Naive thymus-derived CD4-positive, alpha-beta T cell (primary cell): ENCODE measurements at regions of chr13 and their contacts with region 1.

Region 1: GRCh38 chr13:73984949-73985691 is 149.1 kb downstream of the KLF12 start:
- DNase-seq: peak; percentile 48 to 95 (median 91)
- ATAC-seq: peak; percentile 94
- H3K4me3 ChIP-seq: peak overlapping the region; percentile 14
- H3K4me3 Mint-ChIP-seq: peak overlapping the region in 9 of 10 donors; percentile 67 to 89 (median 78)
- H3K27ac ChIP-seq: peak overlapping the region; percentile 82
- H3K27ac Mint-ChIP-seq: peak overlapping the region in 1 of 9 donors; percentile 80
- H3K4me1 ChIP-seq: peaks cover 28 to 52% of the 10 kb centered on the region in 2 donors
- H3K4me1 Mint-ChIP-seq: peaks cover 28 to 54% (median 44%) of the 10 kb centered on the region in 7 donors
- H3K27me3 ChIP-seq: no peaks in the 10 kb centered on the region
- H3K27me3 Mint-ChIP-seq: no peaks in the 10 kb centered on the region

Region 2: GRCh38 chr13:73835138-73835721 is 149.9 kb before region 1 on chr13:
- CTCF ChIA-PET with region 1: no interaction called
- POLR2A ChIA-PET with region 1: interaction called, 3 read pairs
- intact Hi-C with region 1: loop called in 1 of 2 experiments (anchors 5 kb)
- DNase-seq: peak in 7 of 9 donors; percentile 16 to 60 (median 54)
- ATAC-seq: peak; percentile 64
- H3K4me3 ChIP-seq: no peak overlapping the region
- H3K4me3 Mint-ChIP-seq: no peak overlapping the region
- H3K27ac ChIP-seq: no peak overlapping the region
- H3K27ac Mint-ChIP-seq: no peak overlapping the region
- H3K4me1 ChIP-seq: peaks cover 7 to 41% of the 10 kb centered on the region in 2 donors
- H3K4me1 Mint-ChIP-seq: peaks cover 5 to 71% (median 43%) of the 10 kb centered on the region in 7 donors
- H3K27me3 ChIP-seq: no peaks in the 10 kb centered on the region
- H3K27me3 Mint-ChIP-seq: no peaks in the 10 kb centered on the region

Region 3: DNA sequence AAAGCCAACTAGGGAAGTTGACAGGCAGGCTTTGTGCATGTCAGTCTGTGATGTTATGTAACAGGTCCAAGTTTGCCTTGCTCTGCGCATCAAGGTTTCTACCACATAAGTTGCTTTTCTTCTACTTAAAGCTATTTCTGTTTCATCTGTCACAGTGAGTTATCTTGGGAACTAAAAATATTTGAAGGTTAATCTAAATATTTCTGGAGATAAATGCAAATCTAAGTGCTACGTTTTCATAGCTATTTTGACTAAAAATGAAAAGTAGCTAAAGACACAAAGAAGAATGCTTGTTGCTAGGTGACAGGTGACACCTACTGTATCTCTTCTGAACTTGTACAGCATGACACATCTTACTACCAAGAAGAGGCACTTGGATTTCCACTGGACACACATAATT is 13.5 kb after region 1 on chr13:
- CTCF ChIA-PET with region 1: no interaction called
- POLR2A ChIA-PET with region 1: interaction called, 6 read pairs
- intact Hi-C with region 1: loop called in 1 of 2 experiments (anchors 2 kb)
- DNase-seq: peak in 4 of 9 donors; percentile 12 to 40 (median 28)
- ATAC-seq: peak; percentile 50
- H3K4me3 ChIP-seq: no peak overlapping the region
- H3K4me3 Mint-ChIP-seq: peak overlapping the region in 5 of 10 donors; percentile 6 to 42 (median 14)
- H3K27ac ChIP-seq: peak overlapping the region; percentile 23
- H3K27ac Mint-ChIP-seq: peak overlapping the region in 7 of 9 donors; percentile 16 to 78 (median 47)
- H3K4me1 ChIP-seq: peaks cover 13 to 14% of the 10 kb centered on the region in 2 donors
- H3K4me1 Mint-ChIP-seq: peaks cover 11 to 89% (median 72%) of the 10 kb centered on the region in 7 donors
- H3K27me3 ChIP-seq: no peaks in the 10 kb centered on the region
- H3K27me3 Mint-ChIP-seq: no peaks in the 10 kb centered on the region

Region 4: GRCh38 chr13:74062933-74063332 is 77.8 kb after region 1 on chr13:
- CTCF ChIA-PET with region 1: no interaction called
- POLR2A ChIA-PET with region 1: interaction called, 3 read pairs
- intact Hi-C with region 1: loop called (anchors 2 kb)
- DNase-seq: peak in 1 of 9 donors; percentile 24
- ATAC-seq: peak; percentile 5
- H3K4me3 ChIP-seq: no peak overlapping the region
- H3K4me3 Mint-ChIP-seq: peak overlapping the region; percentile 26 to 80 (median 64)
- H3K27ac ChIP-seq: no peak overlapping the region
- H3K27ac Mint-ChIP-seq: peak overlapping the region; percentile 58 to 86 (median 81)
- H3K4me1 ChIP-seq: peaks cover 52 to 73% of the 10 kb centered on the region in 2 donors
- H3K4me1 Mint-ChIP-seq: peaks cover 50 to 95% (median 91%) of the 10 kb centered on the region in 7 donors
- H3K27me3 ChIP-seq: no peaks in the 10 kb centered on the region
- H3K27me3 Mint-ChIP-seq: no peaks in the 10 kb centered on the region

Region 5: GRCh38 chr13:74246487-74246886 is 261.4 kb after region 1 on chr13:
- CTCF ChIA-PET with region 1: no interaction called
- POLR2A ChIA-PET with region 1: no interaction called
- intact Hi-C with region 1: loop called in 1 of 2 experiments (anchors 5 kb)
- DNase-seq: peak in 1 of 9 donors; percentile 42
- ATAC-seq: no peak
- H3K4me3 ChIP-seq: peak overlapping the region; percentile 17
- H3K4me3 Mint-ChIP-seq: peak overlapping the region in 9 of 10 donors; percentile 26 to 90 (median 74)
- H3K27ac ChIP-seq: peak overlapping the region; percentile 63
- H3K27ac Mint-ChIP-seq: peak overlapping the region in 8 of 9 donors; percentile 85 to 98 (median 97)
- H3K4me1 ChIP-seq: peaks cover 78 to 88% of the 10 kb centered on the region in 2 donors
- H3K4me1 Mint-ChIP-seq: peaks cover 59 to 98% (median 96%) of the 10 kb centered on the region in 7 donors
- H3K27me3 ChIP-seq: no peaks in the 10 kb centered on the region
- H3K27me3 Mint-ChIP-seq: peaks cover 0 to 9% (median 0%) of the 10 kb centered on the region in 5 donors